Ovary (tissue), 10 donors: ENCODE measurements at regions of chr15 and their contacts with region 1.

Region 1: DNA sequence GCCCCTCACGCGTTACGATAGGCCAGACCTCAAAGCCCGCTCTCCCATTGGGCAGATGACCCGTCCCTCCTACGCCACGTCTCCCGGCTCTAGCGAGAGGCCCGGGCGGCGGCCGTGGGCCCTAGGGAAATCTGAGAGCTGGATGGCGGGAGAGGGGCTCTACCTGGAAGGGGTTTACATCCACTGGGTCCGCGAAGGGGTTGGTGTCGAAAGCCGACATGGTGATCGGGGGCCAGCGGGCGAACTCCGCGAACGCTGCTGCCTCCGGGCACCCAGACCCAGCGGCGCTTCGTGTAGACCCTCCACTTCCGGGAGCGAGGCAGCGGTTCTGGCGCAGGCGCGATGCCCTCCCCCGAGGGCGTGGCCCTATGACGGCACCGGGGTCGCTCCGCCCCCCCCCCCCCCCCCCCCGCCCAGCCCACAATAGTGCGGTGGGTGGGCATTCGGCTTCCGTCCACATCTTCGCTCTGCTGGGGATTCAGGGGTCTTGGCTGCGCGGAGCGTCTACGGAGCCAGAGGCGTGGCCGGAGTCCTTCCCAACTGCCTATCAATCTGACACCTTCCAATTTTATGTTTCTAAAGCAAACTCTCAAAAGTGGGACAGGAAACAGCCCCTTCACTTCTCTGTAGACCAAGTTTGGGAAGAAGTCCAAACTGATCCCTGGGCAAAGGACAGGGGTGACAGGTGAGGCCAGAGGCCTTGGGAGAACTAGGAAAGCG is at the start of gene SCAMP2:
- DNase-seq: peak; percentile 92 to 95 (median 93)
- H3K4me3 ChIP-seq: peak within 1 kb of the TSS; percentile 89
- H3K27ac ChIP-seq: peak within 1 kb of the TSS in 1 of 2 donors; percentile 87
- H3K4me1 ChIP-seq: peaks cover 3% of the 10 kb centered on the region
- H3K27me3 ChIP-seq: no peaks in the 10 kb centered on the region
- CTCF ChIP-seq: no peak
- EP300 ChIP-seq: no peak
- POLR2A ChIP-seq: peak; percentile 82
- total RNA-seq, gene SCAMP2: 22.9 to 65.5 (median 53.1) TPM

Region 2: DNA sequence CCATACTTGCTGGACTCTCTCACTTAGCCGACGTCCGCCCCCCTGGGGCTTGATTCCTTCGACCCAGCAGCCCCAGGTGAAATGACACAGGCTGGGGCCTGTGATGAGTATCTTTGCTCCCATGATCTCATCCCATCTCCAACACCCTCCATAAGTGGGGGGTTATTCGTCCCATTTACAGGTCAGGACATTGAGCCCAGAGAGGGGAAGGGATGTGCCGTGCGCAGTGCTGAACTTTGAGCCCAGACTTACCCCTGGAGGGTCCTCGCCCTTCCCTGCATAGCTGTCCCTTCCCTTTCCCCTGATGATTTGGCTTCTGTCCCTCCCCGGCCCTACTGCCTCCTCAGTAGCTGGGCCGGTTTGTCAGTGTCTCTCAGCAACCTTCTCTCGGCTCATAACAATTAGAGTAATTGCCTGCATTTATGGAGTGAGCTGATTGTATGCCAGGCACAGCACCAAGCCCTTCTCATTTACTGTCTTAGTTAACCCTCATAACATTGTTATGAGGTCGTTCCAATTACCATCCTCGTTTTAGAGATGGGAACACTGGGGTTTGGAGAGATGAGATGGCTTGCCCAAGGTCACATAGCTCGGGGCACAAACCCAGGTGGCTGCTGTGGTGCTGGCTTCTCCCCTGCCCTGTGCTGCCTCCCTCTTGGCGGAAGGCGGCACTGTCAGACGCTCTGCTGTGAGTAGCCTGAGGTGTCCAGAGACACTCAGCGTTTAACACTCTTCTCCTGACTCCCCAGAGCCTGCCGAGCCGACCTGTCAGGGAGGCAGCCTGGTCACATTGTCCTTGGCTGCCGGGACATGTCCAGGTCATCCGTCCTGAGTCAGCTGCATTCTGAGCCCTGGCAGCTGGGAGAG is 56.2 kb before region 1 on chr15:
- intact Hi-C with region 1: loop called in 1 of 4 experiments (anchors 10 kb)
- DNase-seq: no peak
- H3K4me3 ChIP-seq: no peak overlapping the region
- H3K27ac ChIP-seq: no peak overlapping the region
- H3K4me1 ChIP-seq: no peaks in the 10 kb centered on the region
- H3K27me3 ChIP-seq: no peaks in the 10 kb centered on the region
- CTCF ChIP-seq: no peak
- EP300 ChIP-seq: no peak
- POLR2A ChIP-seq: no peak

Region 3: GRCh38 chr15:75123395-75123794 is 250.2 kb after region 1 on chr15:
- intact Hi-C with region 1: no loop called
- DNase-seq: no peak
- H3K4me3 ChIP-seq: no peak overlapping the region
- H3K27ac ChIP-seq: peak overlapping the region in 1 of 2 donors; percentile 57
- H3K4me1 ChIP-seq: peaks cover 7% of the 10 kb centered on the region
- H3K27me3 ChIP-seq: no peaks in the 10 kb centered on the region
- CTCF ChIP-seq: no peak
- EP300 ChIP-seq: no peak
- POLR2A ChIP-seq: no peak